Endothelial cell of umbilical vein (primary cell): ENCODE measurements at regions of chr6 and their contacts with region 1.

Region 1: GRCh38 chr6:44127186-44128019 is at the starts of genes MRPL14 and TMEM63B:
- DNase-seq: peak; percentile 81
- H3K4me3 ChIP-seq: peak within 1 kb of the TSS; percentile 88 to 90 (median 89)
- H3K27ac ChIP-seq: peak within 1 kb of the TSS; percentile 74
- H3K4me1 ChIP-seq: peaks cover 46% of the 10 kb centered on the region
- H3K27me3 ChIP-seq: no peaks in the 10 kb centered on the region
- CTCF ChIP-seq: no peak
- POLR2A ChIP-seq: peak; percentile 94
- total RNA-seq, gene MRPL14: 62.4 and 68.1 TPM in 2 replicates
- total RNA-seq, gene TMEM63B: 39.4 and 49.7 TPM in 2 replicates

Region 2: GRCh38 chr6:44041461-44042260 is 85.7 kb before region 1 on chr6:
- CTCF ChIA-PET with region 1: no interaction called
- POLR2A ChIA-PET with region 1: no interaction called
- dilution Hi-C with region 1: no loop called
- intact Hi-C with region 1: no loop called
- DNase-seq: peak; percentile 82
- H3K4me3 ChIP-seq: no peak overlapping the region
- H3K27ac ChIP-seq: peak overlapping the region; percentile 72
- H3K4me1 ChIP-seq: peaks cover 26% of the 10 kb centered on the region
- H3K27me3 ChIP-seq: no peaks in the 10 kb centered on the region
- CTCF ChIP-seq: no peak
- POLR2A ChIP-seq: peak; percentile 32

Region 3: DNA sequence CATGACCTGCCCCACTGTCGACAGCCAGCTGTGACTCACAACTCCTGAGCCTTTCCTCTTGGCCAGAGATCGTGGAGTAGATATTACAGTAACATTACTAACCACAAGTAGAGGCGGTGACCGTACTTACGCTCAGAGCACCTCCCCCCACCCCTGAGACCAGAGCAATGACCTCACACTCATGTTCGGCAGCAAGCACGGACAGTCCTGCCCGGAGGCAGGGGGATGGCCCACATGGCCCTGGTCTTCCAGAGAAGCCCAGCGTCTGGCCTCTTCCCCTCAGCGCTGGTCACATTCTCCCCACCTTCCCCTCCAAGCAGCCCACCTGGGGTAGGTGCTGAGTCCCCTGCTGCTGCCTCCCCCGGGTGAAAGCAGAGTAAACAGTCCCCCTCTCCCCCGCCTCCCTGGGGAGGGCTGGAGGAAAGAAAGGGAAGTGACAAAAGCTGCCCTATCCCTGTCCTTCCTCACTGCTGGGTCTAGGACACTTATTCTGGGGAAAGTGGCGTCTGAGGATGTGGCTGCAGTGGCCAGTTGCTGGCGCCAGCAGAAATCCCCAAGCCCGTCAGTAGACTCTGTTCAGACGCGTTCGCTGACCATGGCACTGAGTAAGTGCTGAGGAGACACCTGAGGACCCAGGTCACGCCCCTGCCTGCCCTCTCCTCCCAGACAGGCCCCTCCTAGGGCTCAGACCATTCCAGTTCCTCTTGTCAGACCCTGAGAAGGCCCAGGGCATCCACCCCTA is 68.6 kb before region 1 on chr6:
- CTCF ChIA-PET with region 1: no interaction called
- POLR2A ChIA-PET with region 1: no interaction called
- dilution Hi-C with region 1: no loop called
- intact Hi-C with region 1: no loop called
- DNase-seq: peak; percentile 95
- H3K4me3 ChIP-seq: no peak overlapping the region
- H3K27ac ChIP-seq: peak overlapping the region; percentile 93
- H3K4me1 ChIP-seq: peaks cover 39% of the 10 kb centered on the region
- H3K27me3 ChIP-seq: no peaks in the 10 kb centered on the region
- CTCF ChIP-seq: no peak
- POLR2A ChIP-seq: no peak

Region 4: GRCh38 chr6:44104481-44105021 is 22.9 kb before region 1 on chr6:
- CTCF ChIA-PET with region 1: interaction called, 62 read pairs
- POLR2A ChIA-PET with region 1: interaction called, 4 read pairs
- dilution Hi-C with region 1: no loop called
- intact Hi-C with region 1: loop called (anchors 1 kb)
- DNase-seq: peak; percentile 97
- H3K4me3 ChIP-seq: no peak overlapping the region
- H3K27ac ChIP-seq: peak overlapping the region; percentile 89
- H3K4me1 ChIP-seq: peaks cover 37% of the 10 kb centered on the region
- H3K27me3 ChIP-seq: no peaks in the 10 kb centered on the region
- CTCF ChIP-seq: no peak
- POLR2A ChIP-seq: peak; percentile 84

Region 5: DNA sequence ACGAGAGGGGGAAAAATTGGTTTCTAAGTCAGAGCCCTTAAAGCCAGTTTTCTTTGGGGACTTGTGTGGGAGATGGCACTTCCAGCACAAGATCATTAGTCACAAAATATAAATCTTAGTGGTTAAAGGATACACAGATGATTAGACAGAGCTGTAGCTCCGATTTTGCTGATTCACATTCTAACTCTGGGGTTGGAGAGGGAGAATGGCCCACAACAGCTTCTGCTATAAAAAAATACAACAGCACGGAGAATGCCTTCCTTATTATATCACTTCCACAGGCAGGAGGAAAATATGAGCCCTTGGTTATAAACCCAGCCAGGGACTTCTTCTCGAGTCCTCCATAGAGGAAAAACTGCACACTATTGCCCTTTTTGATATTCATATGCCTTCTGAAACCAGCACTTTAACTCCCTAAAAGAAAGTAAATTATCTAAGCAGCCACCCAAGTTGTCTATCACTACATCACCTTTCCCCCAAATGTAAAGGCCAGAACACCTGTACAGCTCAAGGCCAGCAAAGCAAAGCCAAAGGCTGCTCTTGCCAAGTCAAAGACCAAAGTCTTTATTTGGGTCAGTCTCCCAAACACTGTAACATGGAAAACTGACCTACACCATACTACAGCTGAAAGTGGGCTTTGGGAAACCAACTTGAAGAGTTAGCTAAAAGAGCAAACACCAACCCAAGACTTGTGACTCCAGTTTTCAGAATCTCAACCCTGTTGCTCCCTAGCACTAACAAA is 10.6 kb before region 1 on chr6:
- CTCF ChIA-PET with region 1: interaction called, 4 read pairs
- POLR2A ChIA-PET with region 1: interaction called, 5 read pairs
- dilution Hi-C with region 1: no loop called
- intact Hi-C with region 1: loop called (anchors 1 kb)
- DNase-seq: peak; percentile 81
- H3K4me3 ChIP-seq: no peak overlapping the region
- H3K27ac ChIP-seq: peak overlapping the region; percentile 73
- H3K4me1 ChIP-seq: peaks cover 33% of the 10 kb centered on the region
- H3K27me3 ChIP-seq: no peaks in the 10 kb centered on the region
- CTCF ChIP-seq: no peak
- POLR2A ChIP-seq: no peak

Region 6: GRCh38 chr6:44151348-44152108 is 24.1 kb after region 1 on chr6:
- CTCF ChIA-PET with region 1: interaction called, 4 read pairs
- POLR2A ChIA-PET with region 1: no interaction called
- dilution Hi-C with region 1: no loop called
- intact Hi-C with region 1: loop called (anchors 1 kb)
- DNase-seq: peak; percentile 63
- H3K4me3 ChIP-seq: no peak overlapping the region
- H3K27ac ChIP-seq: no peak overlapping the region
- H3K4me1 ChIP-seq: no peaks in the 10 kb centered on the region
- H3K27me3 ChIP-seq: no peaks in the 10 kb centered on the region
- CTCF ChIP-seq: peak; percentile 99
- POLR2A ChIP-seq: no peak

Region 7: GRCh38 chr6:44185953-44186634 is 58.7 kb after region 1 on chr6:
- CTCF ChIA-PET with region 1: no interaction called
- POLR2A ChIA-PET with region 1: no interaction called
- dilution Hi-C with region 1: no loop called
- intact Hi-C with region 1: no loop called
- DNase-seq: peak; percentile 32
- H3K4me3 ChIP-seq: no peak overlapping the region
- H3K27ac ChIP-seq: peak overlapping the region; percentile 76
- H3K4me1 ChIP-seq: peaks cover 17% of the 10 kb centered on the region
- H3K27me3 ChIP-seq: no peaks in the 10 kb centered on the region
- CTCF ChIP-seq: no peak
- POLR2A ChIP-seq: no peak

Region 8: DNA sequence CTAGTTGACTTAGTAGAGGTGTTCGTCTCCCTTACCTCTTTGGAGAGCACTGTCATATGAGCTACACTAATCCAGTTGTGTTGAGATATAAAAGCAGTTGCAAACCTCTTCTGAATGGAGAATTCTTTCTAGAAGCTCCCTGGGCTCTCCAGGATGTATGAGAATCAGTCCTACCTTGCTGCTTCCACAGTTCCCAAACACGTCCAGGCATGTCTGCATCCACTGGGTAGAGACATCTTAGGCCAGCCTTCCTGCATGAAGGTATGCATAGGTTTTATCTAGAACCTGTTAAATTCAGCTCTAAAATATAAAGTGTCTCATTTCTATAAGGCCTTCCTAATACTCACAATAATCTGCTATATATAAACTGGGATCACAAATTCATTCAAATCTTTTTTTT is 557.8 kb after region 1 on chr6:
- CTCF ChIA-PET with region 1: no interaction called
- POLR2A ChIA-PET with region 1: no interaction called
- dilution Hi-C with region 1: no loop called
- intact Hi-C with region 1: no loop called
- DNase-seq: no peak
- H3K4me3 ChIP-seq: no peak overlapping the region
- H3K27ac ChIP-seq: no peak overlapping the region
- H3K4me1 ChIP-seq: no peaks in the 10 kb centered on the region
- H3K27me3 ChIP-seq: no peaks in the 10 kb centered on the region
- CTCF ChIP-seq: no peak
- POLR2A ChIP-seq: no peak